Panc1 (cell line): ENCODE measurements at regions of chr7 and their contacts with region 1.

Region 1: DNA sequence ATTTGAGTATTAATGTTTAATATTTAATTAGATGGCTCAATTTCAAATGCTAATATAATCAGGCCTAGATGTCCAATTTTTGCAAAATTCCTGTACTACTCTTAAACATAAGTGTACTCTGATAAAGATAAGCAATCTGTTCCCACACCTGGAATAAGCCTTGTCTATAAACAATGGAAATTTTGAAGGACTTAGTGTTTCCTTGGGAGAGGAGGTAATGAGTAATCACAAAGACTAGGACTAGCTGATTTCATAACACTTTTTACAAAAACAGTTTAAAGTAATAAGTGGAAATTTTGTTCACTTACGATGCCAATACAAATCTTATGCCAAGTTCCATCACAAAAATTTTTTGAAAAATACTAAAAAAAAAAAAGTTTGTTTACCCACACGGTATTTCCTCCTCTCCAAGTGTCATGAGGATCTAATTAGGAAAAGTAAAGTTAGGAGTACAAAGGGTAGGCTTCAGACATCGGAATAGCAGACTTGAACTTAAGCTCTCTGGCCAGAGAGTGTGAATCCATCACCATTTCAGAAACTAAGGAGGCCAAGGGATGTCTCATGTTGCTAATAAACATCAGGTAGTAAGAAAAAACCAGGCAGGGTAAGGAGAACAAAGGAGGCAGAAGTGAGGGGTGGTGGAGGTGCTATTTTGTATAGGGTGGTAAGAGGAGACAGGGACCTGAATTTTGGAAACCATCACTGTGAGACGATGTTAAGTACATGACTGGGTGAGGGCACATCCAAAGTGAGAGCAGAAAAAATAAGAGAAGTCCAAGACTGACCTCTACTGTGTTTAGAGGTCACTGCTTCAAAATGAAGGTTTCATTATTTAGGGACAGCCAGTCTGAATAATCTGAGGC is 61.3 kb downstream of the RAPGEF5 start:
- DNase-seq: no peak
- ATAC-seq: no peak
- H3K4me3 ChIP-seq: no peak overlapping the region
- H3K27ac ChIP-seq: no peak overlapping the region
- H3K4me1 ChIP-seq: no peaks in the 10 kb centered on the region
- H3K27me3 ChIP-seq: no peaks in the 10 kb centered on the region
- CTCF ChIP-seq: no peak

Region 2: GRCh38 chr7:21383227-21384220 is 912.1 kb before region 1 on chr7:
- CTCF ChIA-PET with region 1: no interaction called
- POLR2A ChIA-PET with region 1: no interaction called
- in situ Hi-C with region 1: no loop called
- intact Hi-C with region 1: no loop called
- DNase-seq: no peak
- ATAC-seq: no peak
- H3K4me3 ChIP-seq: no peak overlapping the region
- H3K27ac ChIP-seq: no peak overlapping the region
- H3K4me1 ChIP-seq: no peaks in the 10 kb centered on the region
- H3K27me3 ChIP-seq: no peaks in the 10 kb centered on the region
- CTCF ChIP-seq: no peak

Region 3: GRCh38 chr7:22488643-22489462 is 193.2 kb after region 1 on chr7:
- CTCF ChIA-PET with region 1: no interaction called
- POLR2A ChIA-PET with region 1: no interaction called
- in situ Hi-C with region 1: no loop called
- intact Hi-C with region 1: loop called (anchors 1 kb)
- DNase-seq: peak; percentile 60
- ATAC-seq: peak; percentile 93
- H3K4me3 ChIP-seq: no peak overlapping the region
- H3K27ac ChIP-seq: no peak overlapping the region
- H3K4me1 ChIP-seq: no peaks in the 10 kb centered on the region
- H3K27me3 ChIP-seq: no peaks in the 10 kb centered on the region
- CTCF ChIP-seq: peak; percentile 95

Region 4: DNA sequence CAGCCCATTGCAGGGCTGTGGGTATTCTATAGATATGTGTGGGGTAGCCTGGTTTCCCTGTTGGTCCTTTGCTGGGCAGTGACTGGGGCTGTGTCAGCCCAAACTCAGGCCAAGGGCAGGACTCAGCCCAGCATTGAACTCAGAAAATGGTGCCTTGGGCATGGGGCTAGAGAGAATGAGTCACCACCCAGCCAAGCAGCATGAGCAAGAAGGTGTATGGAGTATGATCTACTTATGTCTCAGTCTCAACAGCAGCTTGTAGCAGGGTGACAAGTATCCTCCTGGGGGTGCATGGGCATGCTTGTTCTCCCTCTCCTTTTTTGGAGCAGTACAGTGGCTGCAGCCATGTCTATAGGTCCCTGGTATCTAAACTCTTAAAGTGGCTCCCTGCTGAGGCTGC is 1446.4 kb after region 1 on chr7:
- CTCF ChIA-PET with region 1: no interaction called
- POLR2A ChIA-PET with region 1: no interaction called
- in situ Hi-C with region 1: no loop called
- intact Hi-C with region 1: no loop called
- DNase-seq: no peak
- ATAC-seq: 0 out of 2 replicates have a peak, but pooled peaks have one; percentile 34
- H3K4me3 ChIP-seq: no peak overlapping the region
- H3K27ac ChIP-seq: no peak overlapping the region
- H3K4me1 ChIP-seq: no peaks in the 10 kb centered on the region
- H3K27me3 ChIP-seq: no peaks in the 10 kb centered on the region
- CTCF ChIP-seq: no peak